Activated CD4-positive, alpha-beta memory T cell treated with anti-CD3 and anti-CD28 coated beads, Interleukin-2, amount 10 ng/mL, durations not matched to agents 7 days and 5 days (primary cell): ENCODE measurements at regions of chr15 and their contacts with region 1.

Region 1: DNA sequence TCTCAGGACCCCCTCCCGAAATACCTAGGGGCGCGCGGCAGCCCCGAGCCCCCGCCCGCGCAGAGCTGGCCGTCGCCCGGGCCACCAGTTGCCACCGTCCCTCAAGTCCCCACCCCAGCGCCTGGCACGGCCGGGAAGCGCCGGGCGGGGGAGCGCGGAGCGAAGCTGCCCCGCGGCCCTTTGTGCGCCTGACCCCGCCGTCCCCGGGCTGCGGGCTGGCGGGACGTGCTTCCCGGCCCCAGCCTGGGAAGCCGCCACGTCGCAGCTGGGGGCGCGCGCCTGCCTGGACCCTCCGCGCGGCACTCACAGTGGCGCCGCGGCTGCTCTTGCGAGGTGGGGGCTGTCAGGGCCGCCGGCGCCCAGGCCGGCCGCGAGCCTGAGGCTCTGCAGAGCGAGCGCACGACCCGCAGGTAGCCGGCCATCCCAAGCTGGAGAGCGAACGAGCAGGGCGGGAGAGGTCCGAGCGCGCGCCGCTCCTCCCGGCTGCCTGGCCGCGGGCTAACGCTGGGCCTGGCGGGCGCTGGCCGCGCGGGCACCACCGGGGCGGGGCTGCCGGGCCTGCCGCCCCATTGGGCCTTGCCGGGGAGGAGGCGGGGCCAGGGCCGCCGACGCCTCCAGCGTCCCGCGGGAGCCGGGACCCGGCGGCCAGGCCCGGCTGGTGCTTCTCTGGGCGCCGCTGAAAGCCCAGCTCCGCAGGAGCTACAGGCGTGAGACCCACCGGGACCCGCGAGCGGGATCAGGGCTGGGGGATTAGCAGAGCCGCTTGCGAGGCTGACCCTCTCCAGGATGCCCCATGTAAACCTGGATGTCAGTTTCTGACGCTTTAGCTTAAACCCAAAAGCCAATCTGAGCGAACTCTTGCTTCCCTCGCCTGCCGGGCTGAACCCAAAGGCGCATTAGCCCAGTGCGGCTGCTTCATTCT is at the start of gene IDH2:
- DNase-seq: peak; percentile 79
- H3K4me3 Mint-ChIP-seq: peak within 1 kb of the TSS; percentile 75
- H3K27ac Mint-ChIP-seq: peak within 1 kb of the TSS; percentile 93
- H3K4me1 Mint-ChIP-seq: peaks cover 53% of the 10 kb centered on the region
- H3K27me3 Mint-ChIP-seq: peaks cover 11% of the 10 kb centered on the region
- total RNA-seq, gene IDH2: 218 to 224 TPM

Region 2: GRCh38 chr15:90086868-90087268 is 15.4 kb before region 1 on chr15:
- CTCF ChIA-PET with region 1: interaction called, 19 read pairs
- POLR2A ChIA-PET with region 1: interaction called, 16 read pairs
- DNase-seq: peak; percentile 63
- H3K4me3 Mint-ChIP-seq: no peak overlapping the region
- H3K27ac Mint-ChIP-seq: no peak overlapping the region
- H3K4me1 Mint-ChIP-seq: peaks cover 16% of the 10 kb centered on the region
- H3K27me3 Mint-ChIP-seq: no peaks in the 10 kb centered on the region

Region 3: GRCh38 chr15:90143166-90143655 is 41.0 kb after region 1 on chr15:
- CTCF ChIA-PET with region 1: interaction called, 12 read pairs
- POLR2A ChIA-PET with region 1: interaction called, 21 read pairs
- DNase-seq: peak; percentile 76
- H3K4me3 Mint-ChIP-seq: no peak overlapping the region
- H3K27ac Mint-ChIP-seq: peak overlapping the region; percentile 69
- H3K4me1 Mint-ChIP-seq: peaks cover 47% of the 10 kb centered on the region
- H3K27me3 Mint-ChIP-seq: no peaks in the 10 kb centered on the region

Region 4: GRCh38 chr15:90265271-90266060 is 163.2 kb after region 1 on chr15 and contains the start of gene NGRN:
- CTCF ChIA-PET with region 1: no interaction called
- POLR2A ChIA-PET with region 1: interaction called, 16 read pairs
- DNase-seq: peak; percentile 94
- H3K4me3 Mint-ChIP-seq: peak within 1 kb of the TSS; percentile 87
- H3K27ac Mint-ChIP-seq: peak within 1 kb of the TSS; percentile 90
- H3K4me1 Mint-ChIP-seq: peaks cover 50% of the 10 kb centered on the region
- H3K27me3 Mint-ChIP-seq: no peaks in the 10 kb centered on the region
- total RNA-seq, gene NGRN: 27.4 to 28.3 TPM